MCF 10A (cell line): ENCODE measurements at regions of chr7 and their contacts with region 1.

Region 1: GRCh38 chr7:24722386-24723177 is 34.7 kb downstream of the GSDME start:
- DNase-seq: peak; percentile 44
- H3K4me3 Mint-ChIP-seq: no peak overlapping the region
- H3K27ac Mint-ChIP-seq: peak overlapping the region; percentile 10
- H3K4me1 Mint-ChIP-seq: peaks cover 30% of the 10 kb centered on the region
- H3K27me3 Mint-ChIP-seq: no peaks in the 10 kb centered on the region
- CTCF ChIP-seq: no peak

Region 2: DNA sequence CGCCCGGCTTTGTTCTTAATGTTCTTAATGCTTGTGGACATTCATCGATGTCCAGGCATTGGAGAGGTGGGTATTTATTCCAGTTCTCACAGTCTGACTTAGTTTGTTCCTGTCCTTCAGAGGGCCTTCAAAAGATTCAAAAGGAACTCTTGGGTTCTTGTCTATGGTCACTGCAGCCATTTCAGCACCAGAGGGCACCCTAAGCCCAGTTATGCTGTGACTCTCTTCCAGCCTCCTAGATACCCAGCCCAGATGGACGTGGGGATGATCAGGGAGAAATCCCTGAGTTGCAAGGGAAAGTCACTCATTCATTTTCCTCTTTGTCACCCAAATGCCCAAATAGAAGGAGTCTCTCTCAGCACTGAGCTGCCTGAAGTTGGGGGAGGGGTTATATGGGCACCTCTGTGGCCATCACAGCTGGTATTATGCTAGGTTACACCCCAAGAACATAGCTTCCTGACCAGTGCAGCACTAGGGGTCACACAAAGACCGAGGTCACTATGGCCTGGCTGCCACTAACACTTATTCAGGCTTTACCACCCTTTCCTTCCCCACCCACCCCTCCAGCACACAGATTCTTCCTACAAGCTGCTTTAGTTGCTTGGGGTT is 1151.9 kb before region 1 on chr7:
- CTCF ChIA-PET with region 1: interaction called, 6 read pairs
- POLR2A ChIA-PET with region 1: no interaction called
- intact Hi-C with region 1: loop called (anchors 2 kb)
- DNase-seq: peak; percentile 85
- H3K4me3 Mint-ChIP-seq: no peak overlapping the region
- H3K27ac Mint-ChIP-seq: no peak overlapping the region
- H3K4me1 Mint-ChIP-seq: no peaks in the 10 kb centered on the region
- H3K27me3 Mint-ChIP-seq: no peaks in the 10 kb centered on the region
- CTCF ChIP-seq: peak; percentile 90

Region 3: GRCh38 chr7:24665564-24666294 is 56.9 kb before region 1 on chr7:
- CTCF ChIA-PET with region 1: interaction called, 11 read pairs
- POLR2A ChIA-PET with region 1: interaction called, 6 read pairs
- intact Hi-C with region 1: no loop called
- DNase-seq: peak; percentile 68
- H3K4me3 Mint-ChIP-seq: no peak overlapping the region
- H3K27ac Mint-ChIP-seq: no peak overlapping the region
- H3K4me1 Mint-ChIP-seq: peaks cover 21% of the 10 kb centered on the region
- H3K27me3 Mint-ChIP-seq: no peaks in the 10 kb centered on the region
- CTCF ChIP-seq: peak; percentile 63

Region 4: GRCh38 chr7:24741691-24742504 is 19.3 kb after region 1 on chr7:
- CTCF ChIA-PET with region 1: interaction called, 18 read pairs
- POLR2A ChIA-PET with region 1: interaction called, 8 read pairs
- intact Hi-C with region 1: no loop called
- DNase-seq: peak; percentile 87
- H3K4me3 Mint-ChIP-seq: no peak overlapping the region
- H3K27ac Mint-ChIP-seq: peak overlapping the region; percentile 90
- H3K4me1 Mint-ChIP-seq: peaks cover 30% of the 10 kb centered on the region
- H3K27me3 Mint-ChIP-seq: no peaks in the 10 kb centered on the region
- CTCF ChIP-seq: no peak

Region 5: GRCh38 chr7:24812310-24812945 is 89.8 kb after region 1 on chr7:
- CTCF ChIA-PET with region 1: interaction called, 10 read pairs
- POLR2A ChIA-PET with region 1: no interaction called
- intact Hi-C with region 1: no loop called
- DNase-seq: peak; percentile 60
- H3K4me3 Mint-ChIP-seq: no peak overlapping the region
- H3K27ac Mint-ChIP-seq: no peak overlapping the region
- H3K4me1 Mint-ChIP-seq: peaks cover 3% of the 10 kb centered on the region
- H3K27me3 Mint-ChIP-seq: no peaks in the 10 kb centered on the region
- CTCF ChIP-seq: peak; percentile 82